Activated naive CD4-positive, alpha-beta T cell treated with anti-CD3 and anti-CD28 coated beads, Interleukin-2, amount 10 ng/mL, durations not matched to agents 7 days and 5 days (primary cell): ENCODE measurements at regions of chr16 and their contacts with region 1.

Region 1: DNA sequence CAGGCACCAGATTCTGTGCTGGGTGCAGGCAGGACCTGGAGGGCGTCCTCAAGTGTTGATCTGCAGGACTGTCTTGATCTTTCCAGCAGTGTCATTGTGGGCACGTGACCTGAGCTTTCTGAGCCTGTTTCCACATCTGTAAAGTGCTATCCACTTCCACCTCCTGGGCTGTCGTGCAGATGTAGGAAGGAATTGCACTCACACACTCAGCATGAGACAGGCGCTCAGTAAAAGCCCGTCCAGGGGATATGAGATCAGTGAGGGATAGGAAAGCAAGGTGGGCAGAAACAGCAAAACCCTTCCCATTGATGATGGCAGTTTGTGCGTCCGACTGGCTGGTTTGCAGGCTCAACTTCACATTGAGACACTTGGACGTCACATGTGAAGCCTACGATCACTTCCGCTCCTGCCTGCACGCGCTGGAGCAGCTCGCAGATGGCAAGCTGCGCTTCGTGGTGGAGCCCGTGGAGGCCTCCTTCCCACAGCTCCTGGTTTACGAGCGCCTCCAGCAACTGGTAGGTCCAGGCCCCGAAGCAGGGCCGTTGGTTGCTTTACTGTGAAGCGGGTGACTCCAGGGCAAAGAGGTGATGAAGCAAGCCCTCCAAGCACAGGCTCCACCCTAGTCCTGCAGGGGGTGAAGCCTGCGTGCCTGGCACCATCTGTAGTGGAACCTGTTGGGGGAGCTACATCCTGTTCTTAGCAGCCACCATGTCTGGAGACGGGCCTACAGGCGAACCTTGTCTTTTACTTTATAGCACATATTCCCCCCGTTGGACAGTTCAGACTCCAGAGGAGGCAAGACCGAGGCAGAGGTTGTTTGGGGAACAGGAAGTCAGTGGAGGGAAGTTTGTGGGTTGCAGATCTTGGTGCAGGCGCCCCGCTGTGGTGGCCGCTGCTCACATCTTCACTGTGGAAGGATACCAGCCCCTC is 23.0 kb downstream of the METTL22 start:
- DNase-seq: peak; percentile 43
- H3K4me3 Mint-ChIP-seq: no peak overlapping the region
- H3K27ac Mint-ChIP-seq: peak overlapping the region; percentile 81
- H3K4me1 Mint-ChIP-seq: peaks cover 17% of the 10 kb centered on the region
- H3K27me3 Mint-ChIP-seq: no peaks in the 10 kb centered on the region

Region 2: GRCh38 chr16:8572919-8573724 is 71.4 kb before region 1 on chr16:
- CTCF ChIA-PET with region 1: interaction called, 21 read pairs
- DNase-seq: no peak
- H3K4me3 Mint-ChIP-seq: no peak overlapping the region
- H3K27ac Mint-ChIP-seq: no peak overlapping the region
- H3K4me1 Mint-ChIP-seq: peaks cover 2% of the 10 kb centered on the region
- H3K27me3 Mint-ChIP-seq: peaks cover 51% of the 10 kb centered on the region

Region 3: DNA sequence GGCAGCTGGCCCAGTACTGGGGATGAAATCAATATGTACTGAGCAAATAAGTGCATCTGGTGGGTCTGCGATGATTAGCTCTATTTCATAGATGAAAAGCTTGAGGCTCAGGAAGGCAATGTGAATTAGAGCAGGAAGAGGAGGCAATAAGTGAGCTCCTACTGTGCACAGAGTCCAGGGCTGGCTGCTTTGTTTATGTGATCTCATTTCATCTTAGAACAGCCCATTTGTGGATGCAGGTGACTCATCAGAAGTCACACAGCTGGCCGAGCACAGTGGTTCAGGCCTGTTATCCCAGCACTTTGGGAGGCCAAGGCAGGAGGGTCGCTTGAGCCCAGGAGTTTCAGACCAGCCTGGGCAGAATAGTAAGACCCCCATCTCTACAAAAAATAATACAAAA is 61.3 kb before region 1 on chr16:
- CTCF ChIA-PET with region 1: no interaction called
- DNase-seq: no peak
- H3K4me3 Mint-ChIP-seq: no peak overlapping the region
- H3K27ac Mint-ChIP-seq: no peak overlapping the region
- H3K4me1 Mint-ChIP-seq: no peaks in the 10 kb centered on the region
- H3K27me3 Mint-ChIP-seq: peaks cover 31% of the 10 kb centered on the region

Region 4: DNA sequence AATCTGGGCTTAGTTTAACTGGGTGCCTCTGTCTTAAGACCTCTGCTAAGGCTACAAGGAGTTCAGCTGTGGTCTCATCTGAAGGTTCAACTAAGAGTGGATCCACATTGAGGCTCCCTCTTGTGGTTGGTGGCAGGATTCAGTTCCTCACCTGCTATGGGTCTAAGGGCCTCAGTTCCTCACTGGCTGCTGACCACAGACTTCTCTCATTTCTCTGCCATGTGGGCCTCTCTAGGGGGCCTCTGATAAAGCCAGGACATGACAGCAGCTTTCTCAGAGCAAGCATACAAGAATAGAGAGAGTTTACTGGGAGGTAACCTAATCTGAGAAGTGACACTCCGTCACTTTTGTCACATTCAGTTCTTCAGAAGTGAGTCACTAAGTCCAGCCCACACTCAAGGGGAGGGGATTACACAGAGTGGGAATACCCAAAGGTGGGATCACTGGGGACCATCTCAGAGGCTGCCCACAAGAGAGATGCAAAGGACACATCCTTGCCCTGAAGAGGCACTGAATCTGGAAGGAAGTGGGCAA is 10.8 kb after region 1 on chr16:
- CTCF ChIA-PET with region 1: interaction called, 20 read pairs
- DNase-seq: peak; percentile 62
- H3K4me3 Mint-ChIP-seq: no peak overlapping the region
- H3K27ac Mint-ChIP-seq: no peak overlapping the region
- H3K4me1 Mint-ChIP-seq: no peaks in the 10 kb centered on the region
- H3K27me3 Mint-ChIP-seq: no peaks in the 10 kb centered on the region